ENCODE measurements at regions of chr1 and their contacts with region 1.

Region 1: GRCh38 chr1:151254217-151255213 is at the start of gene PSMD4:
- DNase-seq: peak; percentile 94 to 95
- H3K4me3 ChIP-seq: peak within 1 kb of the TSS; percentile 67 to 92 (median 82)
- H3K27ac ChIP-seq: peak within 1 kb of the TSS; percentile 80
- H3K4me1 ChIP-seq: peaks cover 0 to 1% (median 0%) of the 10 kb centered on the region in 4 experiments; a peak in 1 of 7 replicates
- H3K27me3 ChIP-seq: no peaks in the 10 kb centered on the region
- CTCF ChIP-seq: no peak
- EP300 ChIP-seq: no peak
- POLR2A ChIP-seq: peak; percentile 91 to 98
- RAD21 ChIP-seq: no peak
- total RNA-seq, gene PSMD4: 216 and 226 TPM in 2 replicates

Region 2: DNA sequence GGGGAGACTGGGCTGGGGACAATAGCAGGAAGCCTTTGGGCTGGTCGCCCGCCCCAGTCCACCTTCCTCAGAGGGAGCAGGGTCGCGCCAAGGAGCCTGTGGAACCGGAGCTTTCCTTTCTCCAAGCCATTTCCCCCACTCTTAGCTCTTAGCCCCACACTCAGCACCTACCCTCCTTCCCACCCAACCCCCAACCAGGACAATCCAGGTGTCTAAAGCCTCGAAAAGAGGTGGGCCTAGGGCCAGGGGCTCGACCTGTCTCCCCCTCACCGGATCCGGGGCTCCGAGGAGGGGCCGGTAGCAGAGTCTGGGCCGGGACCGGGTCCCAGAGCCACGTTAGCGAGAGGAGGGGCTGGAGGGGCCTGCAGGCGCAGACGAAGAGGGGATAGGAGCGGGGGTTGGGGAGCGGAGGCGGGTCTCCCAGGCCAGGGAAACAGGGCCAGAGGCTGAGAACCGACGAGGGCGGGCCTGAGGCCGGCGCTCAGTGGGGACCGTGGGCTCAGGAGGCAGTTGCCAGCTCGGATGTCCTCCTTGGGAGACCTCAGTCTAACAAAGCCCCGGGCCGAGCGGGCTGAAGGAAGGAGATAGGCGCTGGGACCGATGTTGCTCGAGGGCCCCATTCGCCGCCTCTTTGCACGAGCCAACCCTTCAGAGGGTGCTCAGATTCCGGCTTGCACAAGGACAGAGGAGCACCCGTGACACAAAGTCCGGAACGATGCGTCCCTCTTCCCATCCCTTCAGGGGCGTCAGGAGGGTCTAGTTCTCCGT is 109.0 kb before region 1 on chr1:
- CTCF ChIA-PET with region 1: no interaction called
- POLR2A ChIA-PET with region 1: no interaction called
- DNase-seq: peak in 1 of 2 experiments; percentile 77
- H3K4me3 ChIP-seq: peak overlapping the region; percentile 81 to 88 (median 85)
- H3K27ac ChIP-seq: no peak overlapping the region
- H3K4me1 ChIP-seq: peaks cover 15 to 31% (median 21%) of the 10 kb centered on the region in 4 experiments
- H3K27me3 ChIP-seq: peaks cover 0 to 17% (median 8%) of the 10 kb centered on the region in 4 experiments; a peak in 5 of 7 replicates
- CTCF ChIP-seq: no peak
- EP300 ChIP-seq: no peak
- POLR2A ChIP-seq: no peak
- RAD21 ChIP-seq: no peak

Region 3: GRCh38 chr1:151227634-151228033 is 26.9 kb before region 1 on chr1:
- CTCF ChIA-PET with region 1: interaction called, 27 read pairs
- POLR2A ChIA-PET with region 1: interaction called, 5 read pairs
- DNase-seq: no peak
- H3K4me3 ChIP-seq: no peak overlapping the region
- H3K27ac ChIP-seq: no peak overlapping the region
- H3K4me1 ChIP-seq: 0 out of 7 replicates have a peak, but pooled peaks cover 0 to 2% (median 0%) of the 10 kb centered on the region in 4 experiments
- H3K27me3 ChIP-seq: no peaks in the 10 kb centered on the region
- CTCF ChIP-seq: peak in 1 of 3 experiments; percentile 8; a peak in 1 of 4 replicates
- EP300 ChIP-seq: no peak
- POLR2A ChIP-seq: no peak
- RAD21 ChIP-seq: no peak

Region 4: DNA sequence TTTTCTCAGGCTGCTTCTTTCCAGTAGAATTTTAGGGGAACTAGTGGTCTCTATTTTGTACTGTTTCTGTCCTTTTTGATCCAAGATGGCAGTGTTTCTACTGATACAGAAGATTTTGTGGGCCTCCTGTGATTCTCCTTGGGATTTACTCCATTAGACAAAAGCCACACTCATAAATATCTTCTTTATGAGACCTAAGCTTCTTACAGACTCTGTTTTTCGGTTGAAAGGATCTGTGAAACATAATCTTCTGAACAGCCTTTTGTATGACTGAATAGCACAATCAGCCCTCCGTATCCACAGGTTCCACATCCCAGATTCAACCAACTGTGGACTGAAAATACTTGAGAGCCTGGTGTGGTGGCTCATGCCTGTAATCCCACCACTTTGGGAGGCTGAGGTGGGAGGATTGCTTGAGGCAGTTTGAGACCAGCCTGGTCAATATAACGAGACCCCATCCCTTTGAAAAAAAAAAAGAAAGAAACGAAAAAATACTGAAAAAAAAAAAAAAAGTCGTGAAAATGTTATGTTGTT is 10.8 kb before region 1 on chr1:
- CTCF ChIA-PET with region 1: interaction called, 21 read pairs
- POLR2A ChIA-PET with region 1: interaction called, 6 read pairs
- DNase-seq: no peak
- H3K4me3 ChIP-seq: no peak overlapping the region
- H3K27ac ChIP-seq: no peak overlapping the region
- H3K4me1 ChIP-seq: no peaks in the 10 kb centered on the region
- H3K27me3 ChIP-seq: no peaks in the 10 kb centered on the region
- CTCF ChIP-seq: no peak
- EP300 ChIP-seq: no peak
- POLR2A ChIP-seq: no peak
- RAD21 ChIP-seq: no peak

Region 5: GRCh38 chr1:151281969-151282882 is 27.7 kb after region 1 on chr1 and contains the start of gene ZNF687:
- CTCF ChIA-PET with region 1: interaction called, 5 read pairs
- POLR2A ChIA-PET with region 1: interaction called, 12 read pairs
- DNase-seq: peak; percentile 98 to 100
- H3K4me3 ChIP-seq: peak within 1 kb of the TSS; percentile 77 to 96 (median 86)
- H3K27ac ChIP-seq: peak within 1 kb of the TSS; percentile 99
- H3K4me1 ChIP-seq: peaks cover 5 to 9% (median 7%) of the 10 kb centered on the region in 4 experiments; a peak in 5 of 7 replicates
- H3K27me3 ChIP-seq: no peaks in the 10 kb centered on the region
- CTCF ChIP-seq: no peak
- EP300 ChIP-seq: no peak
- POLR2A ChIP-seq: no peak; a peak in 1 of 3 replicates
- RAD21 ChIP-seq: no peak
- total RNA-seq, gene ZNF687: 43.0 and 45.9 TPM in 2 replicates

Measured in H1 (cell line).